GM12878 (cell line): ENCODE measurements at regions of chr4 and their contacts with region 1.

Region 1: GRCh38 chr4:160159457-160159856 is 1056.6 kb downstream of the RAPGEF2 start:
- DNase-seq: no peak
- ATAC-seq: no peak
- H3K4me3 ChIP-seq: no peak overlapping the region
- H3K27ac ChIP-seq: no peak overlapping the region
- H3K4me1 ChIP-seq: no peaks in the 10 kb centered on the region
- H3K27me3 ChIP-seq: no peaks in the 10 kb centered on the region
- CTCF ChIP-seq: no peak
- EP300 ChIP-seq: no peak
- POLR2A ChIP-seq: no peak
- RAD21 ChIP-seq: no peak

Region 2: DNA sequence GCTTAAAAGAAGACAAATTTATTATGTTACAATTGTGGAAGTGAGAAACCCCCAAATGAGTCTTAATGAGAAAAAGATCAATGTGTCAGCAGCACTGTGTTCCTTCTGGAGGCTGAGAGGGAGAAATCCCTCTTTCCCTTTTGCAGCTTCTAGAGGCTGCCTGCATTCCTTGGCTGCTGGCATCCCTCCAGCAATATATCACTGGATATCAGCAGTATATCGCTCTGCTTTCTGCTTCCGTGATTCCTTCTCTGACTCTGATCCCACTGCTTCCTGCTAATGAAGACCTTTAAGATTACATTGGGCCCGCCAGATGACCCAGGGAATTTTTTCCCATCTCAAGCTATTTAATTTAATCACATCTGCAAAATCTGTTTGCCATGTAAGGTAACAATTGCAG is 48.6 kb before region 1 on chr4:
- CTCF ChIA-PET with region 1: no interaction called
- POLR2A ChIA-PET with region 1: no interaction called
- RAD21 ChIA-PET with region 1: no interaction called
- SMC1A ChIA-PET with region 1: no interaction called
- in situ Hi-C with region 1: loop called (anchors 5 kb)
- intact Hi-C with region 1: loop called (anchors 2 kb)
- DNase-seq: no peak
- ATAC-seq: no peak
- H3K4me3 ChIP-seq: no peak overlapping the region
- H3K27ac ChIP-seq: no peak overlapping the region
- H3K4me1 ChIP-seq: no peaks in the 10 kb centered on the region
- H3K27me3 ChIP-seq: no peaks in the 10 kb centered on the region
- CTCF ChIP-seq: no peak
- EP300 ChIP-seq: no peak
- POLR2A ChIP-seq: no peak
- RAD21 ChIP-seq: no peak

Region 3: GRCh38 chr4:160117686-160118085 is 41.8 kb before region 1 on chr4:
- CTCF ChIA-PET with region 1: no interaction called
- POLR2A ChIA-PET with region 1: no interaction called
- RAD21 ChIA-PET with region 1: no interaction called
- SMC1A ChIA-PET with region 1: no interaction called
- in situ Hi-C with region 1: loop called (anchors 5 kb)
- intact Hi-C with region 1: no loop called
- DNase-seq: no peak
- ATAC-seq: no peak
- H3K4me3 ChIP-seq: no peak overlapping the region
- H3K27ac ChIP-seq: no peak overlapping the region
- H3K4me1 ChIP-seq: no peaks in the 10 kb centered on the region
- H3K27me3 ChIP-seq: no peaks in the 10 kb centered on the region
- CTCF ChIP-seq: no peak
- EP300 ChIP-seq: no peak
- POLR2A ChIP-seq: no peak
- RAD21 ChIP-seq: no peak